Esophagus muscularis mucosa (tissue), 4 donors: ENCODE measurements at regions of chr1 and their contacts with region 1.

Region 1: DNA sequence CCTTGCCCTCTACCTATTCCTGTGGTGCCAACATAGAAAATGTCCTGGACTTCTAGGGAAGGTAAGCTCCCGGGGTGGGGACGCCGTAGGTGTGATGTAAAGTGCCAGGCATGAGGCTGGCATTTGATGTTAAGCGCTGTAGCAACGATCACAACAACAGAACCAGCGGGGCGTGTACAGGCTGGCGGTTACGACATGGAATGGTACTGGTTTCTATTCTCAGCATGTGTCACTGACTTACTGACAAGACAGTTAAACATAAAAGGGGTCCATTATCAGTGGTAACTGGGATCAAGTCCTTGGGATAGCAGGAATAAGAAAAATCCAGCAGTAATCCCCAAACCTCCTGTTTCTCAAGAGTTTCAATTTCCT is 58.9 kb downstream of the TGFBR3 start:
- DNase-seq: peak; percentile 87
- H3K4me3 ChIP-seq: no peak overlapping the region
- H3K27ac ChIP-seq: peak overlapping the region; percentile 80 to 83 (median 82)
- H3K4me1 ChIP-seq: peaks cover 51 to 84% (median 74%) of the 10 kb centered on the region in 4 donors
- H3K27me3 ChIP-seq: no peaks in the 10 kb centered on the region
- CTCF ChIP-seq: no peak
- EP300 ChIP-seq: peak; percentile 82
- POLR2A ChIP-seq: no peak

Region 2: DNA sequence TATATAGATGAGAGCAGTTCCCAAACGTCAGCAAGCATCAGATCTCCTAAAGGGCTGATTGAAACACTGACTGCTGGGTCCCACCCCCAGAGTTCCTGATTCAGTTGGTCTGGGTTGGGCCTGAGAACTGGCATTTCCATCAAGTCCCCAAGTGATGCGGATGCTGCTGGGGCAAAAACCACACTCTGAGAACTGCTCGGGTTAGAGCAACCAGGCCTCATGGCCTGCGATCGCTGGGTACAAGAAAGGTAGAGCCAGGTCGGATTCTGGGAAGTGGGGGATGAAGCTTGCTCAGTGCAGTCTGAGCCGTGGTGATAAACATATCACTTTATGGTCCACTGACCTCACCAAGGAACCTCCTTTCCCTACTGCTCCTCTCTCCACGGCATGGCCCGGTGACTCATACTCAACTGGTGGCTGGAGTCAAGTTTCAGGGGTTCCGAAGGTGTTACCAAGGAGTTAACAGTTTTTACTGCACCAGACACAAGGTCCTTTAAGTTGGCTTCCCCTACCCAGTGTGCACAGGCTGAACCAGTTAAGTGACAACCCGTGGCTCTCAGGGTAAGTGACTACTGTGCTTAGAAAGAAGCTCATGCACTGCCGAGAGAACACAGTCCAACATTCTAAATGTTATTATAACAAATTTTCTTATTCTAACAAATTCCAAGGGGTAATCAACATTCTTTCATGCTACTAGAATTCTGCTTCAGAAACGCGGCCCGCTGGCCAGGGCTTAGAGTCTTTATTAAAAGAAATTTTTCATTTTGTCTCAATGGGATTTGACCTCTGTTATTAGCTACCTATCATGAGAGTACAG is 94.6 kb before region 1 on chr1:
- intact Hi-C with region 1: loop called (anchors 5 kb)
- DNase-seq: no peak
- H3K4me3 ChIP-seq: no peak overlapping the region
- H3K27ac ChIP-seq: peak overlapping the region; percentile 86 to 90 (median 87)
- H3K4me1 ChIP-seq: peaks cover 66 to 97% (median 88%) of the 10 kb centered on the region in 4 donors
- H3K27me3 ChIP-seq: no peaks in the 10 kb centered on the region
- CTCF ChIP-seq: no peak
- EP300 ChIP-seq: no peak
- POLR2A ChIP-seq: no peak